Esophagus squamous epithelium (tissue), 5 donors: ENCODE measurements at regions of chr10 and their contacts with region 1.

Region 1: GRCh38 chr10:132223156-132223590 is 36.4 kb downstream of the DPYSL4 start:
- DNase-seq: no peak
- H3K4me3 ChIP-seq: no peak overlapping the region
- H3K27ac ChIP-seq: no peak overlapping the region
- H3K4me1 ChIP-seq: peaks cover 0 to 8% (median 0%) of the 10 kb centered on the region in 3 donors
- H3K27me3 ChIP-seq: no peaks in the 10 kb centered on the region
- CTCF ChIP-seq: peak; percentile 54 to 95 (median 85)
- POLR2A ChIP-seq: no peak

Region 2: GRCh38 chr10:132347211-132347930 is 124.2 kb after region 1 on chr10:
- intact Hi-C with region 1: loop called (anchors 5 kb)
- DNase-seq: no peak
- H3K4me3 ChIP-seq: no peak overlapping the region
- H3K27ac ChIP-seq: no peak overlapping the region
- H3K4me1 ChIP-seq: no peaks in the 10 kb centered on the region
- H3K27me3 ChIP-seq: no peaks in the 10 kb centered on the region
- CTCF ChIP-seq: no peak
- POLR2A ChIP-seq: no peak